Right lobe of liver (tissue), 6 donors: ENCODE measurements at regions of chr15 and their contacts with region 1.

Region 1: GRCh38 chr15:101559952-101560351 is 70.4 kb upstream of the PCSK6 start:
- DNase-seq: no peak
- ATAC-seq: no peak
- H3K4me3 ChIP-seq: no peak overlapping the region
- H3K27ac ChIP-seq: no peak overlapping the region
- H3K4me1 ChIP-seq: peaks cover 0 to 6% (median 0%) of the 10 kb centered on the region in 4 donors
- H3K27me3 ChIP-seq: no peaks in the 10 kb centered on the region
- CTCF ChIP-seq: no peak
- POLR2A ChIP-seq: no peak

Region 2: DNA sequence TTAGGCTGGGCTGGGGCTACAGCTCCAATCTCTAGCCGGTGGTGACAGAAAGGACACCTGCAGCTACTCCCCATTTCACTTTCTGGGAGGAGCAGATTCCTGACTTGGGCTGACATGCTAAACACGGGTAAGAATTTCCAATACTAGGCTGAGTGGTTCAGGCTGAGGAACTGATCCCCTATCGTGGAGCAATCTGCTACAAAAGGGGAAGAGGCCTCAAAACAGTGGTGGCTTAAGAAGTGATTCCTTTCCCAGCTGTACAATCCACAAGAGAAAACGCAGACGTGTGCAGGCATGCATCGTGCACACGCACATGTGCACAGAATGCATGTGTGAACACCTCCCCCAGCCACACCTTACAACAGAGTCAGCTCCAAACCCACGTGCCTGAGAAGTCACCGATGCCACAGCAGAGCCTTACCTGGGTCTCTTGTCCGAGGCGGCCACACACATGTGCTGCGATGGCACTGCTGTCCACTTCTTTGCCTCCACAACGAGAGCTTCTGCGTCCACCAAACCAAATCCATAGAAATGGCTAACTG is 178.2 kb before region 1 on chr15:
- intact Hi-C with region 1: loop called in 1 of 2 experiments (anchors 10 kb)
- DNase-seq: peak in 1 of 3 donors; percentile 46
- ATAC-seq: no peak
- H3K4me3 ChIP-seq: no peak overlapping the region
- H3K27ac ChIP-seq: peak overlapping the region in 2 of 3 donors; percentile 16 to 27
- H3K4me1 ChIP-seq: peaks cover 0 to 31% (median 14%) of the 10 kb centered on the region in 4 donors
- H3K27me3 ChIP-seq: no peaks in the 10 kb centered on the region
- CTCF ChIP-seq: no peak
- POLR2A ChIP-seq: no peak

Region 3: DNA sequence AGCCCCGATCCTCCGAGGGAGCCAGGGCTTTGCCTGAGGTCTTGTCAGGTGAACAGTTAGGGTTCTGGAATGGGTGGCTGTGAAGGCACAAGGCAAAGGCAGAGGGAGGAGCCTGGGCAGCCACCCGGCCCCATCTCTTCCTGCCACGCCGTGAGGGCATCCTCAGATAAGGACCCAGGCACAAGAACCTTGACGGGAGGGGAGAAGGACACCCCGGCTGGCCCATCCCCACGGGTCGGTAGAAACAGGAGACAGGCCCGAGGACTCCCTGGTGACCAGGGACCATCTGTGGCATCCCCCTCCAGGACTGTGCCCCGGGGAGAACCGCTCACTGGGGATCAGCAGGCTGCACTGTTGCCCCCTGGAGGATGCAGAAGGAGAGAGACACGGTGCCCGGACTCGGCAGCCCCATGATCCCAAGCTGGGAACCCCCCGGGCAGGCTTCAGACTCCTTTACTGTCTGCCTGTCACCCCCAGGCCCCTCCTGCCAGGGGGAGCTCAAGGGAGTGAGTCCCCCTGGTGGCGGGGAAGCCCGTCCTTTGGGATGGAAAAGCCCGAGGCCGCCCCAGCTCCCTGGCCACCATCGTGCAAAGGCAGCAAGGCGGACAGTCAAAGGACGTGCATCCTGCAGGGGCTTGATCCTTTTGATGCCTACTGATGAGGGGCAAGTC is 58.1 kb before region 1 on chr15:
- intact Hi-C with region 1: no loop called
- DNase-seq: no peak
- ATAC-seq: peak in 2 of 4 donors; percentile 4 to 6
- H3K4me3 ChIP-seq: no peak overlapping the region
- H3K27ac ChIP-seq: peak overlapping the region in 2 of 3 donors; percentile 84 to 88
- H3K4me1 ChIP-seq: peaks cover 0 to 29% (median 12%) of the 10 kb centered on the region in 4 donors
- H3K27me3 ChIP-seq: no peaks in the 10 kb centered on the region
- CTCF ChIP-seq: peak; percentile 16 to 45 (median 37)
- POLR2A ChIP-seq: no peak

Region 4: DNA sequence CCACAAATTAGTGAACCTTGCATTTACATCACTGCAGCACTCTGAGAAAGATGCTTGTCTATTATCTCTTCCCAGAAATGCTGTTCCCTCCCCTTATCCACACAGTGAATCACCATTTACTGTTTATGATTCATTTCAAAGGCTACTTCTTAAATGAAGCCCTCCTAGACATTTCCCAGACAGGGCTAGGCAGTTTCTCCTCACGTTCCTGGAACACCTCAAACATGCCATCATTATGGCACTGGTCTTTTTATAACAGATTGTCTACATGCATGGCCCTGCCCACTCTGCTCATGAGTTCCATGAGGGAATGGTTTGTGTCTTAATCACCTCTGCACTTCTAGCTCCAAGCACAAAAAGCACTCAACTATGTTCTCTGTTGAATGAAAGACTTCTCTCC is 124.4 kb after region 1 on chr15:
- intact Hi-C with region 1: no loop called
- DNase-seq: no peak
- ATAC-seq: no peak
- H3K4me3 ChIP-seq: no peak overlapping the region
- H3K27ac ChIP-seq: no peak overlapping the region
- H3K4me1 ChIP-seq: no peaks in the 10 kb centered on the region
- H3K27me3 ChIP-seq: no peaks in the 10 kb centered on the region
- CTCF ChIP-seq: no peak
- POLR2A ChIP-seq: no peak